Common myeloid progenitor, CD34-positive (primary cell): ENCODE measurements at regions of chr19 and their contacts with region 1.

Region 1: GRCh38 chr19:588093-588740 is 1.5 kb upstream of the HCN2 start:
- DNase-seq: peak; percentile 87 to 92 (median 91)
- H3K4me3 ChIP-seq: peak overlapping the region in 1 of 7 experiments; percentile 28
- H3K27ac ChIP-seq: no peak overlapping the region
- H3K4me1 ChIP-seq: peaks cover 0 to 25% (median 19%) of the 10 kb centered on the region in 4 experiments
- H3K27me3 ChIP-seq: peaks cover 0 to 76% (median 18%) of the 10 kb centered on the region in 5 experiments

Region 2: GRCh38 chr19:558770-559439 is 29.3 kb before region 1 on chr19:
- CTCF ChIA-PET with region 1: no interaction called
- POLR2A ChIA-PET with region 1: no interaction called
- DNase-seq: no peak
- H3K4me3 ChIP-seq: no peak overlapping the region
- H3K27ac ChIP-seq: no peak overlapping the region
- H3K4me1 ChIP-seq: peaks cover 0 to 6% (median 0%) of the 10 kb centered on the region in 4 experiments
- H3K27me3 ChIP-seq: no peaks in the 10 kb centered on the region

Region 3: GRCh38 chr19:574658-575362 is 13.4 kb before region 1 on chr19:
- CTCF ChIA-PET with region 1: interaction called, 28 read pairs
- POLR2A ChIA-PET with region 1: no interaction called
- DNase-seq: peak in 2 of 3 donors; percentile 48 to 66
- H3K4me3 ChIP-seq: peak overlapping the region in 2 of 7 experiments; percentile 16 to 35
- H3K27ac ChIP-seq: peak overlapping the region in 1 of 2 experiments; percentile 54
- H3K4me1 ChIP-seq: peaks cover 0 to 49% (median 38%) of the 10 kb centered on the region in 4 experiments
- H3K27me3 ChIP-seq: no peaks in the 10 kb centered on the region